PC-3 (cell line): ENCODE measurements at regions of chr5 and their contacts with region 1.

Region 1: GRCh38 chr5:134648425-134649162 is at the start of gene SEC24A:
- DNase-seq: peak; percentile 81
- ATAC-seq: peak; percentile 88
- H3K4me3 ChIP-seq: peak within 1 kb of the TSS; percentile 94
- H3K27ac ChIP-seq: peak within 1 kb of the TSS; percentile 92
- H3K4me1 ChIP-seq: peaks cover 14% of the 10 kb centered on the region
- H3K27me3 ChIP-seq: no peaks in the 10 kb centered on the region
- CTCF ChIP-seq: no peak
- total RNA-seq, gene SEC24A: 5.6 and 7.7 TPM in 2 replicates

Region 2: DNA sequence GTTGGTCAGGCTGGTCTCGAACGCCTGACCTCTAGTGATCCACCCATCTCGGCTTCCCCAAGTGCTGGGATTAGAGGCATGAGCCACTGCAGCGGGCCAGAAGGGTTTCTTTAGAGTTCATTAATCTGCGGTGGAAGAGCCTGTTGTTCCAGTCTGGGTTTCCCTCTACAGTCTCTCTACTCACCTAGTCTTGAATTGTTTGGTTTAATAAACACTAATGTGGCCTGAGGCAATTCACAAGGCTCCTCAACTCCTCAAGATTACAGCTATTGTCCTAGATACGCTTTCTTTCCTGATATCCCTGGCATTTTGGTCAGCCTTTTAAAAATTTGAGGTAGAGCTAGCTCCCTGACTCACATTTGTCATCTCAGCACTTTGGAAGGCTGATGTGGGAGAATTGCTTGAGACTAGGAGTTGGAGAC is 11.4 kb before region 1 on chr5:
- CTCF ChIA-PET with region 1: no interaction called
- POLR2A ChIA-PET with region 1: no interaction called
- intact Hi-C with region 1: loop called (anchors 1 kb)
- DNase-seq: peak; percentile 74
- ATAC-seq: peak; percentile 14; the same call in 1 of the 2 replicates
- H3K4me3 ChIP-seq: no peak overlapping the region
- H3K27ac ChIP-seq: peak overlapping the region; percentile 17; the same call in 1 of the 2 replicates
- H3K4me1 ChIP-seq: no peaks in the 10 kb centered on the region
- H3K27me3 ChIP-seq: no peaks in the 10 kb centered on the region
- CTCF ChIP-seq: no peak